PC-9 (cell line): ENCODE measurements at regions of chr17 and their contacts with region 1.

Region 1: DNA sequence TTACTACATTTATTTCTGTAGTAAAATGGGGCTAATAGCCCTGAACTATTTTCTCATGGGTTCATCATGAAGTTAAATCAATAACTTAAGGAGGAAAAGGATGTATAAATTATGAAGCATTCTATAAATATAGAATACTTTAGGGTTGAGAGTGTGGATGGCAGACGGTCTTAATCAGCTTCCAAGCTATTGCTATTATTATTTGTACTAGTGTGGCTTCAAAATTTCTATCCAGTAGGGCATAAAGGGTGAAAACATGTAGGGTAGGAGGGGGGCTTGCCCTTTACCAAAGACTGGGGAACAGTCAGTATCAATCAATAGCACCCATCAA is 26.4 kb upstream of the DHX8 start:
- DNase-seq: no peak
- H3K4me3 ChIP-seq: no peak overlapping the region
- H3K27ac ChIP-seq: peak overlapping the region; percentile 50
- H3K4me1 ChIP-seq: peaks cover 25% of the 10 kb centered on the region
- H3K27me3 ChIP-seq: no peaks in the 10 kb centered on the region
- CTCF ChIP-seq: no peak

Region 2: DNA sequence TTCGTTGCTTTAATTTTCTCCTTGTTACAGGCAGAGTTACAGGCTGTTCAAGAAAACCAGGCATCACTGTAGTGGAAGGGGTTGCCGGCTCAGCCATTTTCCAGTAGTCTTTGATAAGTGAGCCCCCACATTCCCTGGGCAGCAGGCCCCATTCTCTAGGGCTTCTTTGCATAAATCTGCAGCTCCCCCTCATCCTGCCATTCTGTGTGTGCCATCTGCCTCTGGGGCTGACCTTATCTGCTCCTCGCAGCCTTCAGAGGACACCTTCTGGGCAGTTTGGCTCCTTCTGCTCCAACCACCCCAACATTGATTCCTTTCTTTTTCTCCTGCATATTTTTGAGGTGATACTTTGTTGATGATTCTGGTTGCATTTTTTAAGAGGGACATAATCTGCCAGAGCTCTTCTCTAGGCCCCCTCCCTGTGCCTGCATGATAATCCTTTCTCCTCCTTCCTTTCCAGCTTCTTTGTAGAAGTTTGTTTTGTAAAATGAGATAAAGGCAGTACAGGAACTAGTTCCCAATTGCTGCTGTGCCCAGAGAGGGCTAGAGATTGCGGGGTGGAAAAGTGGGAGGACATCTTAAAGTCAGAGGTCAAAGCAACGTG is 415.2 kb before region 1 on chr17:
- CTCF ChIA-PET with region 1: no interaction called
- POLR2A ChIA-PET with region 1: no interaction called
- intact Hi-C with region 1: no loop called
- DNase-seq: no peak
- H3K4me3 ChIP-seq: no peak overlapping the region
- H3K27ac ChIP-seq: no peak overlapping the region
- H3K4me1 ChIP-seq: no peaks in the 10 kb centered on the region
- H3K27me3 ChIP-seq: no peaks in the 10 kb centered on the region
- CTCF ChIP-seq: no peak

Region 3: DNA sequence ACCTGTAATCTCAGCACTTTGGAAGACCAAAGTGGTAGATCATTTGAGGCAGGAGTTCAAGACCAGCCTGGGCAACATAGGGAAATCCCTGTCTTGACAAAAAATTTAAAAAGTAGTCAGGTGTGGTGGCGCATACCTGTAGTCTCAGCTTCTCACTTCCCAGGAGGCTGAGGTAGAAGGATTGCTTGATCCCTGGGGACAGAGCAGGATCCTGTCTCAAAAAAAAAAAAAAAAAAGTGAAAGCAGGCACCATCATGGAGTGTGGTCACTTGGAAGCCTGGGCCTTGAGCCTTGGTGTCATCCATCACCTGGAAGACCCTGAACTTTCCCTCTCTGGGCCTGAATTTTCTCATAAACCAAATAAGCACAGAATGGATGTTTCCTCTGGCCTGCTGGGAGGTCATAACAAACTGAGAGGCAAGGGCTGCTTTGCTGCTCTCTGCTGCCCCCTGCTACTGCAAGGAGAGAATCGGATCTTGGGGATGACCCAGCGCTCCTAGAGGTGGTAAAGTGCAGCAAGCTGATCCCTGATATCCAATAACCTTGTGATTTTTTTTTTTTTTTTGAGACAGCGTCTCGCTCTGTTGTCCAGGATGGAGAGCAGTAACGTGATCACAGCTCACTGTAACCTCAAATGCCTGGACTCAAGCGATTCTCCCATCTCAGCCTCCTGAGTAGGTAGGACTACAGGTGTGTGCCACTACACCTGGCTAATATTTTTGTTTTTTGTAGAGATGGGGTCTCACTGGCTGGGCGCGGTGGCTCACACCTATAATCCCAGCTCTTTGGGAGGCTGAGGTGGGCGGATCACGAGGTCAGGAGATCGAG is 147.6 kb before region 1 on chr17:
- CTCF ChIA-PET with region 1: no interaction called
- POLR2A ChIA-PET with region 1: no interaction called
- intact Hi-C with region 1: no loop called
- DNase-seq: peak in 1 of 2 experiments; percentile 49
- H3K4me3 ChIP-seq: no peak overlapping the region
- H3K27ac ChIP-seq: no peak overlapping the region
- H3K4me1 ChIP-seq: peaks cover 4% of the 10 kb centered on the region; the same call in 1 of the 2 replicates
- H3K27me3 ChIP-seq: no peaks in the 10 kb centered on the region
- CTCF ChIP-seq: no peak

Region 4: GRCh38 chr17:43475494-43476089 is 18.3 kb after region 1 on chr17:
- CTCF ChIA-PET with region 1: no interaction called
- POLR2A ChIA-PET with region 1: interaction called, 18 read pairs
- intact Hi-C with region 1: no loop called
- DNase-seq: no peak
- H3K4me3 ChIP-seq: no peak overlapping the region
- H3K27ac ChIP-seq: no peak overlapping the region
- H3K4me1 ChIP-seq: no peaks in the 10 kb centered on the region
- H3K27me3 ChIP-seq: no peaks in the 10 kb centered on the region
- CTCF ChIP-seq: no peak